ENCODE measurements at regions of chr9 and their contacts with region 1.

Region 1: GRCh38 chr9:15837079-15837679 is 284.3 kb downstream of the CCDC171 start:
- DNase-seq: no peak
- H3K4me3 Mint-ChIP-seq: no peak overlapping the region
- H3K27ac Mint-ChIP-seq: no peak overlapping the region
- H3K4me1 Mint-ChIP-seq: no peaks in the 10 kb centered on the region
- H3K27me3 Mint-ChIP-seq: no peaks in the 10 kb centered on the region

Region 2: GRCh38 chr9:16039218-16039987 is 202.2 kb after region 1 on chr9:
- CTCF ChIA-PET with region 1: no interaction called
- POLR2A ChIA-PET with region 1: no interaction called
- intact Hi-C with region 1: no loop called
- DNase-seq: no peak
- H3K4me3 Mint-ChIP-seq: no peak overlapping the region
- H3K27ac Mint-ChIP-seq: no peak overlapping the region
- H3K4me1 Mint-ChIP-seq: no peaks in the 10 kb centered on the region
- H3K27me3 Mint-ChIP-seq: no peaks in the 10 kb centered on the region

Region 3: GRCh38 chr9:16133556-16134227 is 296.5 kb after region 1 on chr9:
- CTCF ChIA-PET with region 1: no interaction called
- POLR2A ChIA-PET with region 1: no interaction called
- intact Hi-C with region 1: loop called (anchors 1 kb)
- DNase-seq: peak; percentile 13
- H3K4me3 Mint-ChIP-seq: no peak overlapping the region
- H3K27ac Mint-ChIP-seq: no peak overlapping the region
- H3K4me1 Mint-ChIP-seq: no peaks in the 10 kb centered on the region
- H3K27me3 Mint-ChIP-seq: peaks cover 2% of the 10 kb centered on the region

Measured in activated CD4-positive, alpha-beta memory T cell treated with anti-CD3 and anti-CD28 coated beads for 36 hours (primary cell).